H1 (cell line): ENCODE measurements at regions of chr9 and their contacts with region 1.

Region 1: GRCh38 chr9:126398403-126399058 is 71.9 kb downstream of the MVB12B start:
- DNase-seq: peak in 1 of 2 experiments; percentile 97
- H3K4me3 ChIP-seq: no peak overlapping the region
- H3K27ac ChIP-seq: no peak overlapping the region
- H3K4me1 ChIP-seq: no peaks in the 10 kb centered on the region; a peak in 1 of 7 replicates
- H3K27me3 ChIP-seq: no peaks in the 10 kb centered on the region
- CTCF ChIP-seq: peak; percentile 97 to 99 (median 99)
- EP300 ChIP-seq: no peak
- POLR2A ChIP-seq: no peak
- RAD21 ChIP-seq: peak; percentile 97 to 99

Region 2: DNA sequence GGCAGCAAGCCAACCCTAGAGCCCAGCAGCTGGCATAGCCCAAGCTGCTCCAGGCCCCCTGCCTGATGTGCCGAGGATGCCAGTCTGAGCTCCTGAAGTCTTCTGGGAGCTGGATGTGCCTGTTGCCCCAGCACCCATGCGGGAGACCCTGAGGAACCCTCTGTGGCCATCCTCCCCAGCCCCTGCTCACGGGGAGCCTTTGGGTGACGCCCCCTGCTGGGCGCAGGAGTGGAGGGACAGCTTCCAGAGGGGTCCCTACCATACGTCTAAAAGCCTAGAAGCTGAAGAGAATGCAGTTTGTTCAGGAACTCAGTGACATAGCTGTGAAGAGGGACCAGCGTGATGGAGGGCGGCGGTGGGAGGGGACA is 105.0 kb before region 1 on chr9:
- CTCF ChIA-PET with region 1: interaction called, 63 read pairs
- POLR2A ChIA-PET with region 1: no interaction called
- DNase-seq: no peak
- H3K4me3 ChIP-seq: no peak overlapping the region
- H3K27ac ChIP-seq: no peak overlapping the region
- H3K4me1 ChIP-seq: no peaks in the 10 kb centered on the region
- H3K27me3 ChIP-seq: no peaks in the 10 kb centered on the region; a peak in 1 of 7 replicates
- CTCF ChIP-seq: peak; percentile 28 to 42 (median 35); a peak in 3 of 4 replicates
- EP300 ChIP-seq: no peak
- POLR2A ChIP-seq: no peak
- RAD21 ChIP-seq: peak; percentile 14 to 23; a peak in 1 of 4 replicates

Region 3: GRCh38 chr9:126317513-126317912 is 81.0 kb before region 1 on chr9:
- CTCF ChIA-PET with region 1: interaction called, 31 read pairs
- POLR2A ChIA-PET with region 1: no interaction called
- DNase-seq: no peak
- H3K4me3 ChIP-seq: no peak overlapping the region
- H3K27ac ChIP-seq: no peak overlapping the region
- H3K4me1 ChIP-seq: peaks cover 0 to 4% (median 2%) of the 10 kb centered on the region in 4 experiments; a peak in 2 of 7 replicates
- H3K27me3 ChIP-seq: no peaks in the 10 kb centered on the region
- CTCF ChIP-seq: peak; percentile 46 to 56 (median 47)
- EP300 ChIP-seq: no peak
- POLR2A ChIP-seq: no peak
- RAD21 ChIP-seq: peak; percentile 48 to 57; a peak in 3 of 4 replicates

Region 4: GRCh38 chr9:126379661-126380360 is 18.7 kb before region 1 on chr9:
- CTCF ChIA-PET with region 1: interaction called, 54 read pairs
- POLR2A ChIA-PET with region 1: no interaction called
- DNase-seq: no peak
- H3K4me3 ChIP-seq: no peak overlapping the region
- H3K27ac ChIP-seq: no peak overlapping the region
- H3K4me1 ChIP-seq: peaks cover 2 to 17% (median 12%) of the 10 kb centered on the region in 4 experiments
- H3K27me3 ChIP-seq: no peaks in the 10 kb centered on the region
- CTCF ChIP-seq: no peak
- EP300 ChIP-seq: no peak
- POLR2A ChIP-seq: no peak
- RAD21 ChIP-seq: no peak

Region 5: GRCh38 chr9:126413391-126414068 is 15.0 kb after region 1 on chr9:
- CTCF ChIA-PET with region 1: interaction called, 21 read pairs
- POLR2A ChIA-PET with region 1: no interaction called
- DNase-seq: no peak
- H3K4me3 ChIP-seq: no peak overlapping the region
- H3K27ac ChIP-seq: no peak overlapping the region
- H3K4me1 ChIP-seq: peaks cover 0 to 3% (median under 1%) of the 10 kb centered on the region in 4 experiments; a peak in 2 of 7 replicates
- H3K27me3 ChIP-seq: no peaks in the 10 kb centered on the region
- CTCF ChIP-seq: no peak
- EP300 ChIP-seq: no peak
- POLR2A ChIP-seq: no peak
- RAD21 ChIP-seq: no peak

Region 6: DNA sequence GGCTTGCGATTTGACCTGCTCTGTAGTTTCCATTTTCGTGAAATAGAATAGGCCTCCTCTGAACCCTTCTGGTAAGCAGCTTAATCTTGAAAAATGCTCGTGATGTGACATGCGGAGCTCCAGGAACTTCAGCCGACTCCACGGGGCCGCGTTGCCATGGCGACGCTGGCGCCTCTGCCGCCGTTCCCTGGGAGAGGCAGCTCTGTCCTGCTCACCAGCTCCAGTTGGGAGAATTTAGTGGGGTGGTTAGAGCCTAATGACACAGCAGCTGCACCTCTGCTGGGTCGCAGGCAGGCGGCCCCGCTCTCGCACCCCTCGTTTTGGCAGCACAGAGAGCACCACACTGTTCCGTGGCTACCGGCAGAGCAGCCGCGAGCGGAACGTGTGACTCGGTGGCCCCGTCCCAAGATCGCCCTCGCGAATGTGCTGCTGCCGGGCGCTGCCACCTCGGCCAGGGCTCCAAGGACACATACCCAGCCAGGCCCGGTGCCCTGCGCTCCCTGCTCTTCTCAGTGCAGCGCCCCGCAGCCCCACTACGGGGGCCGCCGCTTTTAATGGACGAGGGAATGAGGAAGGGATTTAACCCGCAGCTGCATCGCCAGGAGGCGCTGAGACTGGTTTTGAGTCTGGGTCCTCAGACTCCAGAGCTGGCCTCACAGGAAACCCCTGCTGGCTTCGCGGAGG is 84.0 kb after region 1 on chr9:
- CTCF ChIA-PET with region 1: interaction called, 19 read pairs
- POLR2A ChIA-PET with region 1: no interaction called
- DNase-seq: peak; percentile 36 to 79
- H3K4me3 ChIP-seq: peak overlapping the region; percentile 7 to 53 (median 42); a peak in 7 of 8 replicates
- H3K27ac ChIP-seq: no peak overlapping the region
- H3K4me1 ChIP-seq: peaks cover 0 to 4% (median 2%) of the 10 kb centered on the region in 4 experiments; a peak in 3 of 7 replicates
- H3K27me3 ChIP-seq: peaks cover 0 to 5% (median 0%) of the 10 kb centered on the region in 4 experiments; a peak in 3 of 7 replicates
- CTCF ChIP-seq: peak; percentile 38 to 64 (median 52)
- EP300 ChIP-seq: no peak
- POLR2A ChIP-seq: no peak
- RAD21 ChIP-seq: peak in 1 of 2 experiments; percentile 23; a peak in 1 of 4 replicates

Region 7: GRCh38 chr9:126500684-126501382 is 102.3 kb after region 1 on chr9:
- CTCF ChIA-PET with region 1: interaction called, 17 read pairs
- POLR2A ChIA-PET with region 1: no interaction called
- DNase-seq: peak; percentile 82 to 94
- H3K4me3 ChIP-seq: peak overlapping the region in 3 of 4 experiments; percentile 44 to 72 (median 53); a peak in 7 of 8 replicates
- H3K27ac ChIP-seq: no peak overlapping the region
- H3K4me1 ChIP-seq: peaks cover 0 to 11% (median 8%) of the 10 kb centered on the region in 4 experiments; a peak in 6 of 7 replicates
- H3K27me3 ChIP-seq: peaks cover 0 to 10% (median 3%) of the 10 kb centered on the region in 4 experiments; a peak in 5 of 7 replicates
- CTCF ChIP-seq: peak in 2 of 3 experiments; percentile 98 to 99; a peak in 3 of 4 replicates
- EP300 ChIP-seq: peak in 1 of 2 experiments; percentile 54; a peak in 1 of 3 replicates
- POLR2A ChIP-seq: no peak
- RAD21 ChIP-seq: peak; percentile 98